ENCODE measurements at regions of chr21 and their contacts with region 1.

Region 1: GRCh38 chr21:41437729-41438128 is 11.7 kb downstream of the MX1 start:
- DNase-seq: no peak
- ATAC-seq: no peak
- H3K4me3 ChIP-seq: no peak overlapping the region
- H3K27ac ChIP-seq: no peak overlapping the region
- H3K4me1 ChIP-seq: no peaks in the 10 kb centered on the region
- H3K27me3 ChIP-seq: no peaks in the 10 kb centered on the region
- CTCF ChIP-seq: no peak

Region 2: DNA sequence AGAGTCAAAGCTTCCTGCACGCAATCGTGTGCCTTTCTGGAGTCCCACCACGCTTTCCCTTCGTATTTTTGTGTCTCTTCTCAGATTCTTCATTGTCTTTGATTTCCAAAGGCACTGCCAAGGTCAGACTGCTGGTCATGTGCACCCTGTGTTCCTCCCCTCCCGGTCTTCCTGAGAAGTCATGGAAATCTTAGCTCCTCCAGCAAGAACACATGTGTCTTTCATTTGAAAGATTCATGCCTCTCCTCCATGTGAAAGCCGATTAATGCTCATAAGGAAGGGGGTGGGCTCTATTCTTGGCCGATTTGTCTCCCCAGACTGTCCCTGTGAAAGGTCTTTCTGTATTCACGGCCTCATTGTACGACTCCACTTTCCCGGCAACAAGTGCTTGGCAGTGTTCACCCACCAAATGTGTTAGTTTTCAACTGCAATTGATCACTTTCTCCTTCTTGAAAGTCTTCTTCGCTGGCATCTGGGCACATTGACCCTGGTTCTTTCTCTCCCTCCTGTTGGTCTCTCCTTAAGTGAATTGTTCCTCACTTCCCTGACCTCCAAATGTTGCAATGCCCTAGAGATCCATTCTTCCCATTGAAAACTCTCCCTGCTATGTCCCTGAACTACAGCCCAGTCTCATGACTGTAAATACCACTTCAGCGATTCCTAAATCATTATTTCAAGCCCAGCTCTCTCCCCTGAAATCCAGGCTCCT is 50.5 kb before region 1 on chr21:
- intact Hi-C with region 1: loop called in 1 of 10 experiments (anchors 5 kb)
- DNase-seq: no peak
- ATAC-seq: peak in 1 of 8 donors; percentile 18
- H3K4me3 ChIP-seq: no peak overlapping the region
- H3K27ac ChIP-seq: no peak overlapping the region
- H3K4me1 ChIP-seq: no peaks in the 10 kb centered on the region
- H3K27me3 ChIP-seq: peaks cover 0 to 3% (median 0%) of the 10 kb centered on the region in 7 donors
- CTCF ChIP-seq: no peak

Measured in heart right ventricle (tissue), 16 donors.